Pancreas (tissue), 10 donors: ENCODE measurements at regions of chr10 and their contacts with region 1.

Region 1: DNA sequence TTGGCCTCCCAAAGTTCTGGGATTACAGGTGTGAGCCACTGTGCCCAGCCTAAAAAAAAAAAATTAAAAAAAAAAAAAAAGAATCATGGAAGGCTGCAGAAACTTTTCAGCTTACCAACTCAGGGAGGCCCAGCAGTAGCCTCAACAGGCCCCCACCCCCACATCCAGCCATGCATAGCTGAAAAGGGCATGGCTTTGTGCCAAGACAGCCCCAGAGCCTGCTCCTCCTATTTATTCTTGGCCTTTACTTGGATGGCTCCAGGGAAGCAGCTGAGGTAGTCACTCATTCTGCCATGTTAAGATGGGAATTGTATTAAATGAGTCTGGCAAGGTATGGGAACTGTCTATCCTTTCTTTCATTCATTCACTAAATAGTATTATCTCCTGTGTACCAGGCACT is 13.7 kb upstream of the CNNM2 start:
- DNase-seq: no peak
- ATAC-seq: no peak
- H3K4me3 ChIP-seq: no peak overlapping the region
- H3K27ac ChIP-seq: no peak overlapping the region
- H3K4me1 ChIP-seq: no peaks in the 10 kb centered on the region
- H3K27me3 ChIP-seq: no peaks in the 10 kb centered on the region
- CTCF ChIP-seq: no peak

Region 2: GRCh38 chr10:102729029-102730026 is 175.0 kb before region 1 on chr10:
- intact Hi-C with region 1: loop called in 2 of 3 experiments (anchors 10 kb)
- DNase-seq: peak; percentile 67 to 95 (median 86)
- ATAC-seq: peak; percentile 96 to 98 (median 97)
- H3K4me3 ChIP-seq: no peak overlapping the region
- H3K27ac ChIP-seq: no peak overlapping the region
- H3K4me1 ChIP-seq: no peaks in the 10 kb centered on the region
- H3K27me3 ChIP-seq: no peaks in the 10 kb centered on the region
- CTCF ChIP-seq: peak; percentile 85 to 89 (median 86)

Region 3: DNA sequence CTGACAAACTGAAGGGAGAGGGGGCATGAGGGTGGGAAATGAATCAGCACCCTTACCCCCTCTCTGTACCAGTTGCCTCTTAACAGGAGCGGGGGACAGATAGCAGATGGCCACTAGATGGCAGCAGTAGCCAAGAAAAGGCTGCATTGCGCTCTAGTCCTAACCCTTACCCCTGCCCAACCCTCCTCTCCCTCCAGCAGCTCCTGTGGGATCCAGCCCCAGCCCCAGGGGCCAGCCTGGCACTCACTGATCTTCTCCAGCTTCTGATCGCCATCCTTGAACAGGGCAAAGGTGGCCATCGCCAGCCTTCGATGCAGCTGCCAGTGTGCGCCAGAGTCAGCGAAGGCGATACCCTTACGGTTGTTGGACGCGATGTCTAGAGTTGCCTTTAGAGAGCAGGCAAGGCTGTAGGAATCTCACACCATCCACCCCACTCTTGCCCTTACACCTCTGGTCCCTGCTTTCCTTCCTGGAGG is 69.3 kb before region 1 on chr10:
- intact Hi-C with region 1: loop called in 2 of 3 experiments (anchors 5 kb)
- DNase-seq: peak; percentile 54 to 82 (median 70)
- ATAC-seq: peak; percentile 87 to 94 (median 91)
- H3K4me3 ChIP-seq: no peak overlapping the region
- H3K27ac ChIP-seq: no peak overlapping the region
- H3K4me1 ChIP-seq: peaks cover 0 to 5% (median 0%) of the 10 kb centered on the region in 3 donors
- H3K27me3 ChIP-seq: no peaks in the 10 kb centered on the region
- CTCF ChIP-seq: peak; percentile 78 to 86 (median 80)